ENCODE measurements at regions of chr7 and their contacts with region 1.

Region 1: DNA sequence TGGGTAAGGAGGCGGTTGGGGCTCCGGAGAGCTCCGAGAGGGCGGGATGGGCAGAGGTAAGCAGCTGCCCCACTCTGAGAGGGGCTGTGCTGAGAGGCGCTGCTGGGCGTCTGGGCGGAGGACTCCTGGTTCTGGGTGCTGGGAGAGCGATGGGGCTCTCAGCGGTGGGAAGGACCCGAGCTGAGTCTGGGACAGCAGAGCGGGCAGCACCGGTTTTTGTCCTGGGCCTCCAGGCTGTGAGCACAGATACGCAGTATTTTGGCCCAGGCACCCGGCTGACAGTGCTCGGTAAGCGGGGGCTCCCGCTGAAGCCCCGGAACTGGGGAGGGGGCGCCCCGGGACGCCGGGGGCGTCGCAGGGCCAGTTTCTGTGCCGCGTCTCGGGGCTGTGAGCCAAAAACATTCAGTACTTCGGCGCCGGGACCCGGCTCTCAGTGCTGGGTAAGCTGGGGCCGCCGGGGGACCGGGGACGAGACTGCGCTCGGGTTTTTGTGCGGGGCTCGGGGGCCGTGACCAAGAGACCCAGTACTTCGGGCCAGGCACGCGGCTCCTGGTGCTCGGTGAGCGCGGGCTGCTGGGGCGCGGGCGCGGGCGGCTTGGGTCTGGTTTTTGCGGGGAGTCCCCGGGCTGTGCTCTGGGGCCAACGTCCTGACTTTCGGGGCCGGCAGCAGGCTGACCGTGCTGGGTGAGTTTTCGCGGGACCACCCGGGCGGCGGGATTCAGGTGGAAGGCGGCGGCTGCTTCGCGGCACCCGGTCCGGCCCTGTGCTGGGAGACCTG is 26.0 kb downstream of the PRSS2 start:
- DNase-seq: no peak
- H3K4me3 ChIP-seq: peak overlapping the region in 2 of 3 donors; percentile 9 to 27
- H3K27ac ChIP-seq: no peak overlapping the region
- H3K4me1 ChIP-seq: peaks cover 14 to 17% of the 10 kb centered on the region in 2 donors
- H3K27me3 ChIP-seq: peaks cover 12% of the 10 kb centered on the region
- CTCF ChIP-seq: no peak
- POLR2A ChIP-seq: no peak

Region 2: DNA sequence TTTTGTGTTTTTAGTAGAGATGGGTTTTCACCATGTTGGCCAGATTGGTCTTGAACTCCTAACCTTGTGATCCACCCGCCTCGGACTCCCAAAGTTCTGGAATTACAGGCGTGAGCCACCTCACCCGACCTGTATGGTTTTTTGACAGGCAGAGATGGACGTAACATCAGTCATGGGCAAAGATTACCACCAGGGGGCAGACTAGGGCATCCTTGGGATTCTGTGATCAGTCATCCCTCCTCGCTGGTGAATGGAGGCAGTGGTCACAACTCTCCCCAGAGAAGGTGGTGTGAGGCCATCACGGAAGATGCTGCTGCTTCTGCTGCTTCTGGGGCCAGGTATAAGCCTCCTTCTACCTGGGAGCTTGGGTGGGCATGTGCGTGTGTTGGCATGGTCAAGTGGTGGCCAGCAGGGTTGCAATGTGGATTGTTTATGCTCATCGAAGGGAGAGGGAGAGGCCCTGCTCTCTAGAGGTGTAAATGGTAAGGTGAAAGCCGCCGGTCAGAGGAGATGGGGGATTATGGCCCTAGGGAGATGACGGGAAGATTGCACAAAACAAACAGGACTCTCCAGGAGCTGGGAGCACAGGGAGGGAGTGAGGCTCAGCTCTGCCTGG is 170.3 kb before region 1 on chr7:
- intact Hi-C with region 1: loop called (anchors 10 kb)
- DNase-seq: peak; percentile 56 to 63
- H3K4me3 ChIP-seq: no peak overlapping the region
- H3K27ac ChIP-seq: no peak overlapping the region
- H3K4me1 ChIP-seq: no peaks in the 10 kb centered on the region
- H3K27me3 ChIP-seq: no peaks in the 10 kb centered on the region
- CTCF ChIP-seq: peak in 5 of 6 experiments; percentile 17 to 68 (median 44)
- POLR2A ChIP-seq: no peak

Measured in thyroid gland (tissue), 4 donors.